Caco-2 (cell line): ENCODE measurements at regions of chr5 and their contacts with region 1.

Region 1: GRCh38 chr5:44332285-44332971 is 56.8 kb downstream of the FGF10 start:
- DNase-seq: peak in 1 of 2 experiments; percentile 33
- H3K4me3 ChIP-seq: no peak overlapping the region
- H3K4me3 Mint-ChIP-seq: no peak overlapping the region
- H3K27ac Mint-ChIP-seq: no peak overlapping the region
- H3K4me1 ChIP-seq: no peaks in the 10 kb centered on the region
- H3K4me1 Mint-ChIP-seq: no peaks in the 10 kb centered on the region
- H3K27me3 ChIP-seq: no peaks in the 10 kb centered on the region
- H3K27me3 Mint-ChIP-seq: no peaks in the 10 kb centered on the region
- CTCF ChIP-seq: peak; percentile 50 to 56

Region 2: GRCh38 chr5:43631182-43631910 is 701.1 kb before region 1 on chr5:
- CTCF ChIA-PET with region 1: interaction called, 10 read pairs
- POLR2A ChIA-PET with region 1: no interaction called
- intact Hi-C with region 1: no loop called
- DNase-seq: peak; percentile 41 to 70
- H3K4me3 ChIP-seq: no peak overlapping the region
- H3K4me3 Mint-ChIP-seq: no peak overlapping the region
- H3K27ac Mint-ChIP-seq: no peak overlapping the region
- H3K4me1 ChIP-seq: peaks cover 15% of the 10 kb centered on the region
- H3K4me1 Mint-ChIP-seq: peaks cover 6% of the 10 kb centered on the region
- H3K27me3 ChIP-seq: no peaks in the 10 kb centered on the region
- H3K27me3 Mint-ChIP-seq: no peaks in the 10 kb centered on the region
- CTCF ChIP-seq: peak; percentile 54 to 56

Region 3: DNA sequence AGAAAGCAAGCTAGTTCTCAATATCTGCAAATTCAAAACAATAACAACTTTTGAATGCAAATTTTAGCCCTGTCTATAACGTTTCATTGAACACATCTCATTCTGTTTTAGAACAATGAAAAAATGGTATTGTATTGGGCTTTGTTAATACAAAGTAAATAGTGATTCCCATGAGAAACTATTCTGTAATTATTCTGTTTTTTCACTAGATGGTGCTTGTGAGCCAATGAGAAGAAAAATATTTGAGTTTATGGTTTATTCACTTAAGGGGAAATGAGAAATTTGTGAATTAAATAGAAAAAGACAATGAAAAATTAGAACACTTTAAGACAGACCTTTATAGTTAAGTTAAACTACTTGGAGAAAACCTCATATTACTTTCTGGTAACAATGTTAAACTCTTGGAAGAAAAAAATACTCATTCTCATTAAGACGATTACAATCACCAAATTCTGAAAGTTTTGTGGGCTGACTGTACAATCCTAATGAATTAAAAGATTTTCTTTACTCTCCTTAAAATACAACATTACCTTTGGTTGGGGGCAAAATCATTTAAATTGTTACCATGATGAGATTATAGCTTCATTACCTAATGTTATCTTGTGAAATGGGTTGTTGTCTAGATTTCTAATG is 602.5 kb before region 1 on chr5:
- CTCF ChIA-PET with region 1: interaction called, 3 read pairs
- POLR2A ChIA-PET with region 1: no interaction called
- intact Hi-C with region 1: loop called (anchors 1 kb)
- DNase-seq: no peak
- H3K4me3 ChIP-seq: no peak overlapping the region
- H3K4me3 Mint-ChIP-seq: no peak overlapping the region
- H3K27ac Mint-ChIP-seq: no peak overlapping the region
- H3K4me1 ChIP-seq: no peaks in the 10 kb centered on the region
- H3K4me1 Mint-ChIP-seq: no peaks in the 10 kb centered on the region
- H3K27me3 ChIP-seq: no peaks in the 10 kb centered on the region
- H3K27me3 Mint-ChIP-seq: peaks cover 12% of the 10 kb centered on the region
- CTCF ChIP-seq: peak; percentile 29 to 64

Region 4: GRCh38 chr5:43753069-43753468 is 579.4 kb before region 1 on chr5:
- CTCF ChIA-PET with region 1: no interaction called
- POLR2A ChIA-PET with region 1: no interaction called
- intact Hi-C with region 1: loop called (anchors 5 kb)
- DNase-seq: no peak
- H3K4me3 ChIP-seq: no peak overlapping the region
- H3K4me3 Mint-ChIP-seq: no peak overlapping the region
- H3K27ac Mint-ChIP-seq: no peak overlapping the region
- H3K4me1 ChIP-seq: no peaks in the 10 kb centered on the region
- H3K4me1 Mint-ChIP-seq: no peaks in the 10 kb centered on the region
- H3K27me3 ChIP-seq: no peaks in the 10 kb centered on the region
- H3K27me3 Mint-ChIP-seq: peaks cover 3% of the 10 kb centered on the region
- CTCF ChIP-seq: no peak

Region 5: GRCh38 chr5:44345871-44346270 is 13.4 kb after region 1 on chr5:
- CTCF ChIA-PET with region 1: no interaction called
- POLR2A ChIA-PET with region 1: no interaction called
- intact Hi-C with region 1: no loop called
- DNase-seq: no peak
- H3K4me3 ChIP-seq: no peak overlapping the region
- H3K4me3 Mint-ChIP-seq: no peak overlapping the region
- H3K27ac Mint-ChIP-seq: no peak overlapping the region
- H3K4me1 ChIP-seq: no peaks in the 10 kb centered on the region
- H3K4me1 Mint-ChIP-seq: no peaks in the 10 kb centered on the region
- H3K27me3 ChIP-seq: no peaks in the 10 kb centered on the region
- H3K27me3 Mint-ChIP-seq: no peaks in the 10 kb centered on the region
- CTCF ChIP-seq: no peak

Region 6: DNA sequence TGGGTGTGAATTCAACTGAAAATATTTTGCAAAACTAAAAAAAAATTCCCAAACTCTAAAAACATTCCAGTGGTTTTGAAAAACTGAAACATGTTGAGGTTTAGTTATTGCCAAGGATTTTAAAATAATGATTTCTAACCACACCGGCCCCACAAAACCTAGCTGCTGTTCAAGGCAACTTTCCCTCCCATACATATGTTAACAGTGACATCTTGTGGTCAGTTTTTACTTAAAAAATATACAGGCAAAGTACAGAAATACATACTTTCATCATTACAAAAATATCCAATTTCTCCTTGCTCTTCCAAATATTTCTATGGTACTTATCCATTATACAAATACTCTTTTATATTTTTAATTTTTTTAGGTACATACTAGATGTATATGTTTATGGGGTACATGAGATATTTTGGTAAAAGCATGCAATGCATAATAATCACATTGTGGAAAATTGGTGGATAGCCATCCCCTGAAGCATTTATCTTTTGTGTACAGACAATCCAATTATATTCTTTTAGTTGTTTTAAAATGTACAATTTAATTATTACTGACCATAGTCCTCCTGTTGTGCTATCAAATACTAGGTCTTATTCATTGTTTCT is 442.0 kb after region 1 on chr5:
- CTCF ChIA-PET with region 1: no interaction called
- POLR2A ChIA-PET with region 1: no interaction called
- intact Hi-C with region 1: loop called (anchors 1 kb)
- DNase-seq: peak in 1 of 2 experiments; percentile 37
- H3K4me3 ChIP-seq: no peak overlapping the region
- H3K4me3 Mint-ChIP-seq: no peak overlapping the region
- H3K27ac Mint-ChIP-seq: no peak overlapping the region
- H3K4me1 ChIP-seq: no peaks in the 10 kb centered on the region
- H3K4me1 Mint-ChIP-seq: no peaks in the 10 kb centered on the region
- H3K27me3 ChIP-seq: no peaks in the 10 kb centered on the region
- H3K27me3 Mint-ChIP-seq: no peaks in the 10 kb centered on the region
- CTCF ChIP-seq: peak; percentile 49 to 69